Activated naive CD4-positive, alpha-beta T cell treated with anti-CD3 and anti-CD28 coated beads, Interleukin-2, amount 10 ng/mL, durations not matched to agents 7 days and 5 days (primary cell): ENCODE measurements at regions of chr1 and their contacts with region 1.

Region 1: DNA sequence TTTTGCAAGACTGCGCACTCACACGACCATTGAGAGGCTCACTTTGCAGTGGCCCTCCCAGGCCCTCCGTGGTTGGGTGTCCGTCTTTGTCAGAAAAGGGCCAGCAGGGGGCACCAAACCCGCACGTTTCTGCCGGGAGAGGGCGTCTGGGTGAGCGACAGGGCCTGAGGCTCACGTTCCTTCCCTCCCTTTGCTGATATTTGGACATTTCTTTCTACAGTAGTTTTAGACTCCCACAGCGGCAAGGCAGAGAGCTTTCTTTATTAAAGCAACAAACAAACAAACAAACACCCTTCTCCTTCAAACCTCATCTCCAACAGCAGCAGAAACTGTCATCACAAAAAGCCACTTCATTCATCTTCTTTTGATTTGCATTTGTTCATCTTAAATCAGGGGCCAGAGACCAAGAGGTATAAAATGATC is 79.2 kb upstream of the WDR26 start:
- DNase-seq: peak; percentile 89
- H3K4me3 Mint-ChIP-seq: no peak overlapping the region
- H3K27ac Mint-ChIP-seq: no peak overlapping the region
- H3K4me1 Mint-ChIP-seq: peaks cover 23% of the 10 kb centered on the region
- H3K27me3 Mint-ChIP-seq: peaks cover 4% of the 10 kb centered on the region

Region 2: DNA sequence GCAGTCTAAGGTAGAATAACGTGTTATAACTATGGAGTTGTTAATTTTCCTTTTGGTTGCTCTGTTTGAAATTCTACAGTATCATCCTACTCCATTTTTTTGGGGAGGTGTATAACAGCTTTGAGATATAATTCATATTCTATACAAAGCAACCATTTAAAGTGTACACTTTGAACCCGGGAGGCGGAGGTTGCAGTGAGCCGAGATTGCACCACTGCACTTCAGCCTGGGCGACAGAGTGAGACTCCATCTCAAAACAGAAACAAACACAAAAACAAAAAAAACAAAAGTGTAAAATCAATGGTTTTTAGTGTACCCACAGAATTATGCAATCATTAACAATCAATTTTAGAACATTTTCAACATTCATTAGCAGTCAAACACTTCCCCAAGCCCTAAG is 123.3 kb before region 1 on chr1:
- CTCF ChIA-PET with region 1: no interaction called
- DNase-seq: no peak
- H3K4me3 Mint-ChIP-seq: no peak overlapping the region
- H3K27ac Mint-ChIP-seq: no peak overlapping the region
- H3K4me1 Mint-ChIP-seq: peaks cover 33% of the 10 kb centered on the region
- H3K27me3 Mint-ChIP-seq: no peaks in the 10 kb centered on the region

Region 3: DNA sequence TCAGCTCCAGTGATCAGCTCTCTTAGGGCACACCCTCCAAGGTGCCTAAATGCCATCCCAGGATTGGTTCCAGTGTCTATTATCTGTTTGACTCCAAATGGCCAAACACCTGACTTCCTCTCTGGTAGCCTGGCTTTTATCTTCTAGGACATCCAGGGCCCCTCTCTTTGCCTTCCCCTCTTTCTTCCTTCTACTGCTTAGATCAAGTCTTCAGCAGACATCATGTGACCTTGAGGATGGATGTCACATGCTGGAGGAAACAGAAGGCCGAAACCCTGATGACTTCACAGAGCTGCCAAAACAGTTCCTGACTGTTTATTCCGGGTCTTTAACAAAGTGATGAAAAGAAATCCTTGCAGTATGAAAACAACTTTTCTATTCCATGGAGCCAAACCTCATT is 54.8 kb before region 1 on chr1:
- CTCF ChIA-PET with region 1: interaction called, 11 read pairs
- DNase-seq: no peak
- H3K4me3 Mint-ChIP-seq: no peak overlapping the region
- H3K27ac Mint-ChIP-seq: peak overlapping the region; percentile 47
- H3K4me1 Mint-ChIP-seq: peaks cover 24% of the 10 kb centered on the region
- H3K27me3 Mint-ChIP-seq: no peaks in the 10 kb centered on the region

Region 4: DNA sequence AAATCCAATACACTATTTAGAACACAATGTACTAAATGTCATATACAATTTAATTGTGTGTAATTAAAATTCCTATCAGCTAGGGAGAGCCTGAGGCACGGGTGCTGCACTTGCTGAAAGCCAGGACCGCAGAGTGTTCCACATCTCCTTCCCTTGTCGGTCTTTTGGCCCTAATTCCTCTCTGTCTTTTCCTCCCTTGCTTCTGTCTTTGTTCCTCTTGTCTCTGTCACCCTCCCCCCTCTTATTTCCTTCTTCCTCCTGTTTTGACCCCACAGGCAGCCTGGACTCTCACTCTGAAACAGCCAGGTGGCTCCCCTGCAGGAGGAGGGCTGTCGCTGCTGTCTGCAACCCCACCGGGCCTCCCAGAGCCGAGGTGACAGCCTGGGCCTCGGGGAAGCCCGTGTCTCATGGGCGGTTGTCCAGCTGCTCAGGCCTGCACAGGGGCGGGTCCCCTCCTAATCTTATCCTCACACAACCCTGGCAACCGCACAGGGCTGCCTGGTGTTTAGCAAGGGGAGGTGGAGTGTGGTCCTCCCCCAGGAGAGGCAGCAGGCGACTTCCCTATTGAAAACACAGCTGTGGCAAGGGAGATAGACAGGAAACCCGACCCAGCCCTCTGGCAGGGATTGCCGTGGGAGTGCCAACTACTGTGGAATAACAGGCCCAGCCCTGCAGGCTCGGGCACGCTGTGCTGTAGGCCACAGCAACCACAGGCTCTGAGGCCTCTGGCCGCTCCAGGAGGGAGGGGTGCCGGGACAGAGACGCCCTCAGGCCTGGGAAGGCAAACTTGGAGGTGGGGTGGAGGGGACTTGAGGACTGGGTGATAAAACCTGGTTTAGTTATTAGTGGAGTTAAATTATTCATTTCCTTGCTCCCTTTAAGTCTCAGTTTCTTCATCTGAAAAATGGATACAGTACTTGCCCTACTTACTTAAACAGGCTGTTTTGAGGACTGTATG is 10.4 kb before region 1 on chr1:
- CTCF ChIA-PET with region 1: interaction called, 22 read pairs
- DNase-seq: peak; percentile 38
- H3K4me3 Mint-ChIP-seq: no peak overlapping the region
- H3K27ac Mint-ChIP-seq: no peak overlapping the region
- H3K4me1 Mint-ChIP-seq: peaks cover 60% of the 10 kb centered on the region
- H3K27me3 Mint-ChIP-seq: peaks cover 7% of the 10 kb centered on the region

Region 5: GRCh38 chr1:224644553-224645154 is 130.9 kb after region 1 on chr1:
- CTCF ChIA-PET with region 1: interaction called, 28 read pairs
- DNase-seq: peak; percentile 71
- H3K4me3 Mint-ChIP-seq: no peak overlapping the region
- H3K27ac Mint-ChIP-seq: no peak overlapping the region
- H3K4me1 Mint-ChIP-seq: no peaks in the 10 kb centered on the region
- H3K27me3 Mint-ChIP-seq: peaks cover 37% of the 10 kb centered on the region

Region 6: DNA sequence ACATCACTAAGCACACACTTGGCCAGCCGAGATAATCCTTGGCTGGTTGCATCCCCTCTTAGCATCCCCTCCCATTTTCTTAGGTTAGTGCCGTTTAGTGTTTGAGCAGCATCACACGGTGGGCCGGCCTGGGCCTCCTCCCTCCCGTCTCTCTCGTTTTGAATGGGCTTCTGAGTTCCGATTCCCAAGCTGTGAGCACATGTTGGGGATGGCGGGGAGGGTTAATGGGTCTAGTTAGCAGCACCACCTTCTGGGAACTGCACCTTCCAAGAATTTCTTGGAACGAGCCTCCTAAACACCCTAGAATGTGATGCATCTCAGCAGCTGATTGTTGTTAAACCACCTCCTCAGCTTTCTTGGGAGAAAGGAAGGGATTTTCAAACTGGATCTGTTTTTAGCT is 175.6 kb after region 1 on chr1:
- CTCF ChIA-PET with region 1: no interaction called
- DNase-seq: no peak
- H3K4me3 Mint-ChIP-seq: no peak overlapping the region
- H3K27ac Mint-ChIP-seq: no peak overlapping the region
- H3K4me1 Mint-ChIP-seq: no peaks in the 10 kb centered on the region
- H3K27me3 Mint-ChIP-seq: peaks cover 13% of the 10 kb centered on the region

Region 7: GRCh38 chr1:224922404-224923164 is 408.8 kb after region 1 on chr1:
- CTCF ChIA-PET with region 1: interaction called, 50 read pairs
- DNase-seq: no peak
- H3K4me3 Mint-ChIP-seq: no peak overlapping the region
- H3K27ac Mint-ChIP-seq: no peak overlapping the region
- H3K4me1 Mint-ChIP-seq: no peaks in the 10 kb centered on the region
- H3K27me3 Mint-ChIP-seq: peaks cover 5% of the 10 kb centered on the region